ENCODE measurements at regions of chr2 and their contacts with region 1.

Region 1: DNA sequence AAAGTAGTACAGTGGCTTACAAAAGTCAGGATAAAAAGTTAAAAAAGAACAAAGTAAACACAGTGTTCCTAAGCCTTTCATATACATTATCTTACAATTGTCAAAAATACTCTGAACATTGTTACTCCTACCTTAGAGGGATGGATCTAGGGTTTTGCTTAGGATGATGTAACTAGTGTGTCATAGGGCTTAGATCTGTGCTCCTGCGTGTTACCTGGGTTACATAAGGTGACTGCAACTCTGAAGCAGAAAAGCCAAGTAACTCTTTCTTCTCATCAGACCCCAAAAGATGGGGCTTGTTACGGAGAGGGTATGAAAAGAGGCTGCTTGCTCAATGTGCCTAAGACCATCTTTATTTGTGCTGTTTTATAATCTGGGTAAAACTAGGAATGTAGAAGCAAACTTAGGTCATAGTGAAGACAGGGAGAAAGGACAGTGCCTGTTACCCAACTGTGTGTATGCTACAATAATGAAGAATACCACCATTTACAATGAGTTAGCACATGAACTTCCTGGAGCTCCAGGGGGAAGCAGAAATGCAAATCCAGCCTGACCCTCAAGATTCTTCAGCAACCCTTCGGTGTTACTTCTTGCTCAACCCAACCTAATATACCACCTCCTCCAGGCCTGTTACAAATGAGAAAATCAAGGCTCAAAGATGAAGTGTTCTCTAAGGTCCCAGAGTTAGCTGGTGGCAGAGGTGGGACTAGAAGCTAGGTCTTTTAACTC is 42.0 kb upstream of the STK17B start:
- DNase-seq: no peak
- ATAC-seq: peak; percentile 15
- H3K4me3 Mint-ChIP-seq: no peak overlapping the region
- H3K27ac Mint-ChIP-seq: peak overlapping the region; percentile 99
- H3K4me1 Mint-ChIP-seq: peaks cover 76% of the 10 kb centered on the region
- H3K27me3 Mint-ChIP-seq: no peaks in the 10 kb centered on the region
- CTCF ChIP-seq: no peak

Region 2: DNA sequence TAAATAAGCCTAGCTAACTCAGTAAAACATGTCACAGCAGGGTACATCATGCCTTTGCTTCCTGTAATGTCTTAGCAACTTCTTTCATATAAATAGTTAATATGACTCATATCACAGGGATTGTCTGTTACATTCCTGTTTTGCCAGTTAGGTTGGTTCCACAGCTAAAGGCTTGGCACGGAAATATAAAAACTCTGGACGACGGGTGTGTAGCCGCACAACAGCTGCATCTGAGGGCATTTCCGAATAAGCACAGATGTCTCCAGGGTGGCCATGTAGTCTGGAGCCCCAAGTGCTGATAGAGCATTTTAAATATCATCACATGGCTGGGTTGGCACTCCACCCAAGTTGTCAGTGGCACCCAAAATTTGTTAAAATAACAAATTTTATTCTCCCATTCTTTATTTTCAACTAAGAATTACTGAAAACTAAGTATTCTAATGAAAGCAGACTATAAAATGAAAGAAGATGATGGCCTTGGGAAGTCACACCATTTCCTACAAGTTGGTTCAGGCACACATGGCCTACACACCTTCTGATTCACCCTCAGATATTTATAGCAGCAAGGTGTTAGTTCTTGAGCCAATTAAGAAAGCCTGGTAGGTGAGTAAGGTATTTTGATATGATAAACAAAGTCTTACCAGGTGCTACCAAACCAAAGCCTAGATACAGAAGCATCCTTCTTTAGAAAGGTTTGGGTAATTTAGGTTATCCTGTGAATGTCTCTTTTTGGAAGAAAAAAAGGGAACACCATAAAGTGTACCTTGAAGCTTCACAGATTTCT is 19.8 kb after region 1 on chr2:
- CTCF ChIA-PET with region 1: interaction called, 65 read pairs
- POLR2A ChIA-PET with region 1: interaction called, 27 read pairs
- intact Hi-C with region 1: no loop called
- DNase-seq: no peak
- ATAC-seq: peak; percentile 39
- H3K4me3 Mint-ChIP-seq: no peak overlapping the region
- H3K27ac Mint-ChIP-seq: peak overlapping the region; percentile 96
- H3K4me1 Mint-ChIP-seq: peaks cover 86% of the 10 kb centered on the region
- H3K27me3 Mint-ChIP-seq: no peaks in the 10 kb centered on the region
- CTCF ChIP-seq: no peak

Measured in activated CD8-positive, alpha-beta T cell treated with anti-CD3 and anti-CD28 coated beads for 36 hours (primary cell).